Thyroid gland (tissue), 4 donors: ENCODE measurements at regions of chr2 and their contacts with region 1.

Region 1: GRCh38 chr2:102020596-102021181 is 28.9 kb downstream of the IL1R2 start:
- DNase-seq: peak; percentile 89
- H3K4me3 ChIP-seq: no peak overlapping the region
- H3K27ac ChIP-seq: no peak overlapping the region
- H3K4me1 ChIP-seq: peaks cover 3 to 39% of the 10 kb centered on the region in 2 donors
- H3K27me3 ChIP-seq: no peaks in the 10 kb centered on the region
- CTCF ChIP-seq: peak; percentile 96 to 99 (median 98)
- POLR2A ChIP-seq: no peak

Region 2: DNA sequence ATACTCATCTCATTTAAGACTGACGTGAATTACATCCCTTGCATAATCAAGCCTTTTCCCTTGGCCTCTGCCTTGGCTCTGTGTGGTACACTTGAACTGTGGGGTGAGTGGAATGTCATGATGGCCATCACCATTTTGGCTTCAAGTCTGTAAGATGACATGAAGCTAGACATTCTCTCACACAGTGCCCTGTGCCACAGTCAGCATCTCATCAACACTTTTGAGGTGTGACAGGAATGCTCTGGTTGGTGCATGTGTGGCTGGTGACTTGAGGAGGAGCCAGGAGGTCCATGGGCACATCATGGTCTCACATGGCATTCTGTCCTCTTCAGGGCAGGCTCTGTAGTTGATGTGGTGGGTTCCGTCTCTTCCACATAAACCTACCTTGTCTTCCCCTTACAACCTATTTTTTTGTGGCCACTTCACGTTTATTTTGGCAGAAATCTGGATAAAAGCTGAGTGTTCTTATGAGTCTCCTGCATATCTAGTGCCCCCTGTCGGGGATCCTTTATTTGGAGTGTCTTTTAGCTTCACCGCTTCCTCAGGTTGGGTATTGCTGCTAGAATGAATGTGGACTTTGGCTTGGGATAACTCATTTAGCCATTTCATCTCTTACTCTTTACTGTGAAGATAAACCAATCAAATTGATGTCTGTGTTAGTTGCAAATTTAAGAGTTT is 295.0 kb before region 1 on chr2:
- intact Hi-C with region 1: no loop called
- DNase-seq: no peak
- H3K4me3 ChIP-seq: no peak overlapping the region
- H3K27ac ChIP-seq: no peak overlapping the region
- H3K4me1 ChIP-seq: peaks cover 27 to 40% of the 10 kb centered on the region in 2 donors
- H3K27me3 ChIP-seq: no peaks in the 10 kb centered on the region
- CTCF ChIP-seq: peak in 2 of 6 experiments; percentile 13 to 23
- POLR2A ChIP-seq: no peak

Region 3: DNA sequence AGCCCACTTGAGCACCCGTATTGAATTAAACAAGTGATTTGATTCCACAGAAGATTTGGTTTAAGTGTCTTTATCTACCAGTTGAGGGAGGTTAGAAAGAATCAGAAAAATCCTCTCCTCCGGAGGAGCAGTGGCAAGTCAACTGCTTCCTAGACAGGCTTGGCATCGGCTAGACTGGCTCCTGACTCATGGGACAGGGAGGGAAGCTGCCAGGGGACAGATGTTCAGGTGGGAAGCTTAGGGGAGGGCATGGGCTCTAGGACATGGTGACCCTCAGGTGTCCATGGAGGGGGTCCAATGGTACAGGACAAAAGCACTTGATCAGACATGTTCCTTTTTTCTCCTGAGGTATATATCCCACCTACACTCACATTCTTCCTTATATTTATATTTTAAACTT is 148.2 kb before region 1 on chr2:
- intact Hi-C with region 1: no loop called
- DNase-seq: no peak
- H3K4me3 ChIP-seq: no peak overlapping the region
- H3K27ac ChIP-seq: no peak overlapping the region
- H3K4me1 ChIP-seq: no peaks in the 10 kb centered on the region
- H3K27me3 ChIP-seq: no peaks in the 10 kb centered on the region
- CTCF ChIP-seq: no peak
- POLR2A ChIP-seq: no peak

Region 4: GRCh38 chr2:101949304-101949703 is 71.4 kb before region 1 on chr2:
- intact Hi-C with region 1: no loop called
- DNase-seq: no peak
- H3K4me3 ChIP-seq: no peak overlapping the region
- H3K27ac ChIP-seq: no peak overlapping the region
- H3K4me1 ChIP-seq: no peaks in the 10 kb centered on the region
- H3K27me3 ChIP-seq: no peaks in the 10 kb centered on the region
- CTCF ChIP-seq: no peak
- POLR2A ChIP-seq: no peak

Region 5: GRCh38 chr2:102063941-102064678 is 43.4 kb after region 1 on chr2:
- intact Hi-C with region 1: no loop called
- DNase-seq: peak; percentile 92 to 94
- H3K4me3 ChIP-seq: no peak overlapping the region
- H3K27ac ChIP-seq: peak overlapping the region; percentile 83 to 96 (median 87)
- H3K4me1 ChIP-seq: peaks cover 24 to 61% of the 10 kb centered on the region in 2 donors
- H3K27me3 ChIP-seq: no peaks in the 10 kb centered on the region
- CTCF ChIP-seq: no peak
- POLR2A ChIP-seq: no peak

Region 6: GRCh38 chr2:102166189-102166845 is 145.6 kb after region 1 on chr2:
- intact Hi-C with region 1: loop called (anchors 5 kb)
- DNase-seq: peak; percentile 54 to 60
- H3K4me3 ChIP-seq: no peak overlapping the region
- H3K27ac ChIP-seq: peak overlapping the region in 2 of 3 donors; percentile 29 to 31
- H3K4me1 ChIP-seq: peaks cover 15 to 18% of the 10 kb centered on the region in 2 donors
- H3K27me3 ChIP-seq: no peaks in the 10 kb centered on the region
- CTCF ChIP-seq: peak in 5 of 6 experiments; percentile 45 to 82 (median 70)
- POLR2A ChIP-seq: no peak

Region 7: GRCh38 chr2:102240640-102241370 is 220.1 kb after region 1 on chr2:
- intact Hi-C with region 1: loop called (anchors 5 kb)
- DNase-seq: peak; percentile 93 to 95
- H3K4me3 ChIP-seq: no peak overlapping the region
- H3K27ac ChIP-seq: peak overlapping the region; percentile 83 to 89 (median 88)
- H3K4me1 ChIP-seq: peaks cover 9 to 32% of the 10 kb centered on the region in 2 donors
- H3K27me3 ChIP-seq: no peaks in the 10 kb centered on the region
- CTCF ChIP-seq: peak; percentile 95 to 98 (median 97)
- POLR2A ChIP-seq: peak in 1 of 2 donors; percentile 23

Region 8: DNA sequence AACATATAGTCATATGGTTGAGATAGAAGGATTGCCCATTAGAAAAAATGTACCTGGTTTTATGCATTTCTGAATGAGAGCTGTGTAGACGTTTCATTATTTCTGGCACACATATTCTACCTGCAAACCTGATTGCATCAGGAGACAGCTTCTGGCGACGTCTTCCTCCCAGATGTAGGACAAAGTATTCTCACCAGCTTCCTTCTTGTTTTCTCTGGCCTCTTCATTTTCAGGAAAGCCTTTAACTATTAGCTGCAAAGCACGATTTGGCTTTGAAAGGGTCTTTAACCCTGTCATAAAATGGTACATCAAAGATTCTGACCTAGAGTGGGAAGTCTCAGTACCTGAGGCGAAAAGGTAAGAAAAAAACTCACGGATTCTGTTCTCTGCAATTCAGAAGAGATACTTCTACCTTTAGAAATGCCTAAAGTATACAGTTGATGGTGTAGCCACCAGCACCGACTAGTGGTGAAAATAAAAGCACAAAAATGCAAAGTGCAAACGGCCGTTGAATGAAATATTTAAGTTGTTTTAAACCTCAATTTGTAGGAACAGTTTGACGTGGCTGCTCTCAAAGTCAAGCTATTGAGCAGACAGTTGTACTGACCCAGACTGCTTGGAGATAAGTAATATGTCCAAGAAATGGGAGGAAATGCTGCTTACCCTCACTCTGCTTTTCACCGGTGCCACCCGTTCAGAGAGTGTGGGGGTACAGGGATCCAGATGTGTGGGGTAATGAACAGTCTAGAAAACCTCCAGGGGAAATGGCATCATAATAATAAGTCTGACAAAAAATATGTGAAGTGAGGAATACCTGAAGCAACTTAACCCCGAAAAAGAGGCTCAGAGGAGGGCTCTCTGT is 422.5 kb after region 1 on chr2:
- intact Hi-C with region 1: loop called (anchors 10 kb)
- DNase-seq: peak; percentile 24 to 28
- H3K4me3 ChIP-seq: no peak overlapping the region
- H3K27ac ChIP-seq: no peak overlapping the region
- H3K4me1 ChIP-seq: no peaks in the 10 kb centered on the region
- H3K27me3 ChIP-seq: no peaks in the 10 kb centered on the region
- CTCF ChIP-seq: peak; percentile 48 to 77 (median 62)
- POLR2A ChIP-seq: no peak